Spleen (tissue), 13 donors: ENCODE measurements at regions of chr3 and their contacts with region 1.

Region 1: DNA sequence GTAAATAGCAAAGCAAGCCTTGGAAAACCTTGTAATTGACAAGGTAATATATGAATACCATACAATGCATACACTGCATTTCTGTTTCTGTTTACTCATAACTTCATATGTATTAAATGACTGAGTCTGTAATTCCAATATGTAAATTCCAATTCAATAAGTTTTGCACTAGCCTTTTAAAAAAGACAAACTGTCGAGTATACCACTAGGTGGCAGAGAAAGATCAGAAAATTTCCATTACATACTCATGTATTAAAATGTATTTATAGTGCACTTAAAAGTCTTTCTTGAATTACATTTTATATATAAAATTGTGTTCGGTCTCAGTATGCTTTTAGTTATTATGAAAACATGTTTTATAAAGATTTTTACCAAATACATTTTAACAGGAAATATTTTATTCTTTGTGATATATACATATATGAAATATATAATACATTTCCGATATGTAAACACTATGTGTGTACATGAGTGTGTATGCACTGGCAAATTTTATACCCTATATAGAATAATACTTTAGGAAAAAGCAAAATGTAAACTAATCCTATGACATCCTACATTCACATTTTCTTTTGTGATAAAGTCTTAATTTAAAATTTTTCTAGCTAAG is 216.8 kb downstream of the VGLL3 start:
- DNase-seq: no peak
- H3K4me3 ChIP-seq: no peak overlapping the region
- H3K27ac ChIP-seq: no peak overlapping the region
- H3K4me1 ChIP-seq: no peaks in the 10 kb centered on the region
- H3K27me3 ChIP-seq: no peaks in the 10 kb centered on the region
- CTCF ChIP-seq: peak in 7 of 11 experiments; percentile 23 to 53 (median 43)
- POLR2A ChIP-seq: no peak

Region 2: GRCh38 chr3:87082796-87083440 is 308.7 kb after region 1 on chr3:
- intact Hi-C with region 1: loop called (anchors 10 kb)
- DNase-seq: no peak
- H3K4me3 ChIP-seq: no peak overlapping the region
- H3K27ac ChIP-seq: no peak overlapping the region
- H3K4me1 ChIP-seq: no peaks in the 10 kb centered on the region
- H3K27me3 ChIP-seq: no peaks in the 10 kb centered on the region
- CTCF ChIP-seq: peak in 7 of 11 experiments; percentile 21 to 57 (median 37)
- POLR2A ChIP-seq: no peak

Region 3: DNA sequence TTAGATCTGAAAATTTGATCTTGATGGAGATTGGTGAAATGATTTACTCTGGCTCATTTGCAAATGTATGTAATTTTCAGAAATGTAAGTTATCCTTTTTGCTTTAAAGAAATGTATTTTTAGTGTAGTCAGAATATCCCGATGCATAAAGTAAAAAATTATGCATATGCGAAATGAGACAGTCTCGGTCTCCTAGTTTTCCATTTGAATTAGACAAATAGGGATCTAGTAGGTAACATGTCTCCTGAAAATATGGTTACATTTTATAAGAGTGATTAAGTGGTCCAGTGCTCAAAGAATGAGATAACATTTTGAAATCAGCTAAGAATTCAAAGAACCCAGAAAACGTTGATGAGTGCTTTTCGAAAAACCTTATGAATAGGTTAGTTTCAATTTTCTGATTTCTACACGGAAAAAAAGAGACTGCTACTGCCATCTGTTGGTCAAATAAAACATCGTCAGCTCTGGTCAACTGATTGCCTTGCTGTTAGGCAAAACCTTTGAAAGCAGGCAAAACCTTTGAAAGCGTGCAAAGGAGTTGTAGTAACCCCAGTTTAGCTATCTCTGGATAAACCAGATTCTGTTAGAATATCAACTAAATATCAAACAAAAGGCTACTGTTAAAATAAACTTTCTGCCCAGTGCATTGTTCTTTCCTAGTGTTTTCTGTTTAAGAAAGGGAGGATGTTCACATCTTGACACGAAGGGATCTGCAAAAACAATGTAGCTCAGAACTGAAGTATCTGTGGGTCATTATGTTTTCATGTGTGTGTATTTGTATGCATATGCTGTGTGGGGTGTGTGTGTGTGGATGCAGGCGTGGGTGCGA is 393.7 kb after region 1 on chr3:
- intact Hi-C with region 1: loop called (anchors 5 kb)
- DNase-seq: no peak
- H3K4me3 ChIP-seq: peak overlapping the region in 3 of 8 donors; percentile 10 to 55 (median 35)
- H3K27ac ChIP-seq: no peak overlapping the region
- H3K4me1 ChIP-seq: peaks cover 0 to 5% (median 0%) of the 10 kb centered on the region in 6 donors
- H3K27me3 ChIP-seq: peaks cover 0 to 5% (median 0%) of the 10 kb centered on the region in 7 donors
- CTCF ChIP-seq: peak in 9 of 11 experiments; percentile 37 to 67 (median 57)
- POLR2A ChIP-seq: no peak